ENCODE measurements at regions of chr17 and their contacts with region 1.

Region 1: DNA sequence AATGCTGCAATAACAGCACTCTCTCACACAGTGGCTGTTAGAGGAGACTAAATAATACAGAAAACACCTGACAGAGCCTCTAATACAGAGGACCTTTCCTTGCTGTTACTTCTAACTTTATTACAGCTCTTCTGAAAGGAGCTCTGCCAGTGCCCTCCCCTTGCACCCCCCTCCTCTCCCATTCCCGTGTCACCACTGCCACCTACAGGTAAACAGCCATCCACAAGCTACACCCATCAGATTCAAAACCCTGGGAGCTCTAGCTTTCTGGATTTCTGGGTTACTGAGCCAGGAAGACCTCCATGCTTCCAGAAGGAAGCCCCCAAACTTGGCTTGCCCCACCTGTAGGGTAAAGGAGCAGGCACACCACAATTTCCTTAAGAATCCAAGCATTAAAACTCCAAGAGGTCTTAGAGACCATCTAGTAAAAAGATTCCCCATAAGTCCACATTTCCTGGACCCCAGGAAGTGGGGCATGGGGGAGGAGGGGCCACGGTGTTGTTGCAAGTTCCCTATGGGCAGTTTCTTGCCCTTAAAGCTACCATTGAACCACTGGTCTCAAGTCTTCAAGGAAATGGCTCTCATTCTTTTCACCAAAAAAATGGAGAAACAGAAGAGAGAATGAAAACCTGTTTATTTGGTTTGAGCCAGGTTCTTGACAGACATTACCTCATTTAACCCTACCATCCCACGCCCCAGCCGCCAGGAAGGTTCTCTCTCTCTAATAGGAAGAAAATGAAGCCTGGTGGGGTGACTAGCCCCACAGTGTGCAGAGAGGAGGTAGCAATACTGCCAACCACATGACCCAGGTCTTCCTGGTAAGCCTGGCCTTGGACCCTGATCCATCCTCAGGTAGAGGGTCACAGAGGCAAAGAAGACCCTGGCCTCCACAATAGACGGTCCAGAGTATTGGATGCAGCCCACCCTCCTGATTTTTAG is 52.8 kb downstream of the TOM1L2 start:
- DNase-seq: peak; percentile 61
- H3K4me3 ChIP-seq: no peak overlapping the region
- H3K27ac ChIP-seq: peak overlapping the region; percentile 84
- H3K4me1 ChIP-seq: peaks cover 59% of the 10 kb centered on the region
- H3K27me3 ChIP-seq: no peaks in the 10 kb centered on the region
- CTCF ChIP-seq: peak; percentile 88 to 94

Region 2: GRCh38 chr17:17812211-17813057 is 107.0 kb before region 1 on chr17:
- CTCF ChIA-PET with region 1: interaction called, 5 read pairs
- dilution Hi-C with region 1: no loop called
- in situ Hi-C with region 1: no loop called
- intact Hi-C with region 1: loop called (anchors 1 kb)
- DNase-seq: peak; percentile 59
- H3K4me3 ChIP-seq: no peak overlapping the region
- H3K27ac ChIP-seq: no peak overlapping the region
- H3K4me1 ChIP-seq: peaks cover 14% of the 10 kb centered on the region
- H3K27me3 ChIP-seq: no peaks in the 10 kb centered on the region
- CTCF ChIP-seq: peak; percentile 81 to 89

Region 3: GRCh38 chr17:17831208-17832031 is 88.0 kb before region 1 on chr17:
- CTCF ChIA-PET with region 1: no interaction called
- dilution Hi-C with region 1: no loop called
- in situ Hi-C with region 1: no loop called
- intact Hi-C with region 1: no loop called
- DNase-seq: no peak
- H3K4me3 ChIP-seq: no peak overlapping the region
- H3K27ac ChIP-seq: no peak overlapping the region
- H3K4me1 ChIP-seq: peaks cover 27% of the 10 kb centered on the region
- H3K27me3 ChIP-seq: no peaks in the 10 kb centered on the region
- CTCF ChIP-seq: no peak

Region 4: GRCh38 chr17:17890773-17891759 is 28.4 kb before region 1 on chr17:
- CTCF ChIA-PET with region 1: interaction called, 19 read pairs
- dilution Hi-C with region 1: no loop called
- in situ Hi-C with region 1: no loop called
- intact Hi-C with region 1: loop called (anchors 1 kb)
- DNase-seq: peak; percentile 57
- H3K4me3 ChIP-seq: no peak overlapping the region
- H3K27ac ChIP-seq: no peak overlapping the region
- H3K4me1 ChIP-seq: no peaks in the 10 kb centered on the region
- H3K27me3 ChIP-seq: no peaks in the 10 kb centered on the region
- CTCF ChIP-seq: peak; percentile 86 to 95

Region 5: DNA sequence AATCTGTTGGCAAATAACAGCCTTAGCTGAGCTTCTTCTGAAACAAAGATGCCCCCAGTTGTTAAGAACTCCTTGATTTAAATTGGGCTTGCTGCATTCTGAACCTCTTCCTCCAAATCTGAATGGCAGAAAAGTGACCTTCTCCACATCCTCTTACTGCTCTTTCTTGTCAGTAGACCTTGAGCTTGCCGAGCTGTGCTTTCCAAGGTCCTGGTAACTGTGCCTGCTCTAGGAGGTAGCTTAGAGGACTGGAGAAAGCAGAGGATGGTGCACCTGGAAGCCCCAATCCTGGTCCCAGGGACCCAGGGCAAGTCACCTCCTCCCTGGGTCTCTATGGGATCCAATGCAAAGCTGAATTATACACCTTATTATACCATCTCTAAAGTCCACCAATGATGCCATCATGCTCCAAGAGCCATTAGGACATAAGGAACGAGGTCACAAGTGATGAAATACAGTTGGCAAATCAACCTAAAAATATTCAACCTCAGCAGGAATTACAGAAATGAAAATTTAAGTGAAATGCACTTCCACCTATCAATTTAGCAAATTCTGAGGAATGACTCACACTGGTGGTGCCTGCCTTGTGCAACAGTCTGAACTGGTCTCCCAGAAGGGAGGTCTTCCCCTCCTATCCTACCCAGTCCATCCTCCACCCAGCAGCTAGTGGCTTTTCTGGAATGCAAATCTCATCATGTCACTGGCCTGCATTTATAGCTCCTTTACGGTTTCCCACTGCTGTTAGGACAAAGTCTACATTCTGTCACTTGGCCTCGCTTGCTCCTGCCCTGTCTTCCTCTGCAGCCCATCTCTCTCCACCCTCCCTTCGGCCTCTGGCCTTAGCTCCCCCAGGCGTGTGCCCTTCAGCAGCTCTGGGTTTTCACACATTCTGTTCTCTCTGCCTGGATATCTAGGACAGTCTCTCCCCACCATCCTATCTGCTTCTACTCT is 16.2 kb after region 1 on chr17:
- CTCF ChIA-PET with region 1: no interaction called
- dilution Hi-C with region 1: no loop called
- in situ Hi-C with region 1: no loop called
- intact Hi-C with region 1: loop called (anchors 2 kb)
- DNase-seq: peak; percentile 68
- H3K4me3 ChIP-seq: no peak overlapping the region
- H3K27ac ChIP-seq: peak overlapping the region; percentile 56
- H3K4me1 ChIP-seq: peaks cover 58% of the 10 kb centered on the region
- H3K27me3 ChIP-seq: no peaks in the 10 kb centered on the region
- CTCF ChIP-seq: no peak

Region 6: GRCh38 chr17:17972126-17972951 is 52.9 kb after region 1 on chr17 and contains the starts of genes DRC3 and TOM1L2:
- CTCF ChIA-PET with region 1: no interaction called
- dilution Hi-C with region 1: no loop called
- in situ Hi-C with region 1: no loop called
- intact Hi-C with region 1: loop called (anchors 1 kb)
- DNase-seq: peak; percentile 100
- H3K4me3 ChIP-seq: peak within 1 kb of the TSS; percentile 63 to 79 (median 77)
- H3K27ac ChIP-seq: peak within 1 kb of the TSS; percentile 93
- H3K4me1 ChIP-seq: peaks cover 16% of the 10 kb centered on the region
- H3K27me3 ChIP-seq: no peaks in the 10 kb centered on the region
- CTCF ChIP-seq: no peak
- total RNA-seq, gene DRC3: 0.85 to 1.0 TPM
- total RNA-seq, gene TOM1L2: 42.8 to 71.1 TPM

Measured in mammary epithelial cell (primary cell).